CD14-positive monocyte (primary cell): ENCODE measurements at regions of chr12 and their contacts with region 1.

Region 1: DNA sequence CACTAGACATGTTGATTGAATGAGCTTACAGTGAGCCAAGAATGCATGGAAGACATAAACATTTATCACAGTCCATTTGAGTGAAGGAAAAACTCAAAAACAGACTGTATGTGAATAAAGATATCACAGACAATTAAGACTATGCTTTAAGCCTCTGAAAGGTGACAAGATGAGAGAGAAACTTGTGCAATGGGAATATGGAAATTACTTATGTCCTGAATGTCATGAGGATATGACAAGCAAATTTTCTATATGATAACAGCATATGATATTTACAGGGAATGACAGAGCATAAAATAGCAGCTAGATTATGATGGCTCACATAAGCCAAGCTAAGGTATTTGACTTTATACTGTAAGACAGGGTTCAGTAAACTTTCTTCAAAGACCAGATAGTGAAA is 1153.1 kb upstream of the USP15 start:
- DNase-seq: no peak
- H3K4me3 ChIP-seq: no peak overlapping the region
- H3K4me3 Mint-ChIP-seq: no peak overlapping the region
- H3K27ac ChIP-seq: no peak overlapping the region
- H3K27ac Mint-ChIP-seq: no peak overlapping the region
- H3K4me1 ChIP-seq: no peaks in the 10 kb centered on the region
- H3K4me1 Mint-ChIP-seq: no peaks in the 10 kb centered on the region
- H3K27me3 ChIP-seq: no peaks in the 10 kb centered on the region
- H3K27me3 Mint-ChIP-seq: no peaks in the 10 kb centered on the region
- CTCF ChIP-seq: no peak

Region 2: DNA sequence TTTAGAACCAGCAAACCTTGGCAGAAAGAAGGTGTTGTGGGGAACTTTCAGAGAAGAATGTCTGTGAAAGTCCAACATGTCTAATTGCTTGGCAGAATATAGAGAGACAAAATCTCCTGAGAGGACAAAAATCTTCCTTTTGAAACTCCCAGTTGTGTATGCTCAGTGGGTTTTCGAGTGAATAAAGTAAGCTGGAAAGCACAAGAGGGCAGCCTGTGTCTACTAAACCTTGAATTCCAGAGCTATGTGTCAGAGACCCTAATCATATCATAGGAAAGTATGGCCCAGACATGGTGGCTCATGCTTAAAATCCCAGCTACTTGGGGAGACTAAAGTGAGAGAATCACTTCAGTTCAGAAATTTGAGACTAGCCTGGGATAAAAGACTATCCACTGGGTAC is 850.1 kb before region 1 on chr12:
- intact Hi-C with region 1: no loop called
- DNase-seq: no peak
- H3K4me3 ChIP-seq: no peak overlapping the region
- H3K4me3 Mint-ChIP-seq: no peak overlapping the region
- H3K27ac ChIP-seq: no peak overlapping the region
- H3K27ac Mint-ChIP-seq: no peak overlapping the region
- H3K4me1 ChIP-seq: no peaks in the 10 kb centered on the region
- H3K4me1 Mint-ChIP-seq: no peaks in the 10 kb centered on the region
- H3K27me3 ChIP-seq: no peaks in the 10 kb centered on the region
- H3K27me3 Mint-ChIP-seq: no peaks in the 10 kb centered on the region
- CTCF ChIP-seq: no peak

Region 3: DNA sequence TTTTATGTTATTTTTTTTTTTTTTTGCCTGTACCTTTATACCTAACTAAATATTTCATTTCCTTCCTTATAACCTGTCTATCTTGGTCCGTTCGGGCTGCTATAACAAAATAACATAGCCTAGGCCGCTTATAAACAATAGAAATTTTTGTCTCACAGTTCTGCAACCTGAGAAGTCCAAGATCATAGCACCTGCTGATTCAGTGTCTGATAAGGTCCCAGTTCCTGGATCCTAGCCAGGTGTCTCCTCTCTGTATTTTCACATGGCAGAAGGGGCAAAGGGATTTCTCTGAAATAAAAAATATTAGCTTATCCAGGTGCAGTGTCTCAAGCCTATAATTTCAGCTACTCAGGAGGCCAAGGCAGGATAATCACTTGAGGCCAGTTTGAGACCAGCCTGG is 106.5 kb after region 1 on chr12:
- intact Hi-C with region 1: loop called in 1 of 2 experiments (anchors 10 kb)
- DNase-seq: no peak
- H3K4me3 ChIP-seq: no peak overlapping the region
- H3K4me3 Mint-ChIP-seq: no peak overlapping the region
- H3K27ac ChIP-seq: no peak overlapping the region
- H3K27ac Mint-ChIP-seq: no peak overlapping the region
- H3K4me1 ChIP-seq: no peaks in the 10 kb centered on the region
- H3K4me1 Mint-ChIP-seq: no peaks in the 10 kb centered on the region
- H3K27me3 ChIP-seq: no peaks in the 10 kb centered on the region
- H3K27me3 Mint-ChIP-seq: no peaks in the 10 kb centered on the region
- CTCF ChIP-seq: no peak